Activated CD4-positive, alpha-beta memory T cell treated with anti-CD3 and anti-CD28 coated beads for 36 hours (primary cell): ENCODE measurements at regions of chr7 and their contacts with region 1.

Region 1: GRCh38 chr7:150753826-150754603 is 16.8 kb downstream of the GIMAP5 start:
- DNase-seq: peak; percentile 54
- H3K4me3 Mint-ChIP-seq: peak overlapping the region; percentile 26
- H3K27ac Mint-ChIP-seq: peak overlapping the region; percentile 94
- H3K4me1 Mint-ChIP-seq: peaks cover 74% of the 10 kb centered on the region
- H3K27me3 Mint-ChIP-seq: no peaks in the 10 kb centered on the region

Region 2: GRCh38 chr7:150314639-150315239 is 439.3 kb before region 1 on chr7:
- CTCF ChIA-PET with region 1: no interaction called
- POLR2A ChIA-PET with region 1: no interaction called
- intact Hi-C with region 1: no loop called
- DNase-seq: no peak
- H3K4me3 Mint-ChIP-seq: no peak overlapping the region
- H3K27ac Mint-ChIP-seq: no peak overlapping the region
- H3K4me1 Mint-ChIP-seq: peaks cover 11% of the 10 kb centered on the region
- H3K27me3 Mint-ChIP-seq: no peaks in the 10 kb centered on the region

Region 3: GRCh38 chr7:150404805-150405583 is 349.0 kb before region 1 on chr7:
- CTCF ChIA-PET with region 1: interaction called, 6 read pairs
- POLR2A ChIA-PET with region 1: interaction called, 4 read pairs
- intact Hi-C with region 1: loop called (anchors 1 kb)
- DNase-seq: peak; percentile 85
- H3K4me3 Mint-ChIP-seq: peak overlapping the region; percentile 86
- H3K27ac Mint-ChIP-seq: peak overlapping the region; percentile 86
- H3K4me1 Mint-ChIP-seq: peaks cover 35% of the 10 kb centered on the region
- H3K27me3 Mint-ChIP-seq: no peaks in the 10 kb centered on the region

Region 4: GRCh38 chr7:150502519-150502918 is 251.5 kb before region 1 on chr7:
- CTCF ChIA-PET with region 1: interaction called, 3 read pairs
- POLR2A ChIA-PET with region 1: no interaction called
- intact Hi-C with region 1: loop called (anchors 5 kb)
- DNase-seq: peak; percentile 62
- H3K4me3 Mint-ChIP-seq: peak overlapping the region; percentile 36
- H3K27ac Mint-ChIP-seq: peak overlapping the region; percentile 98
- H3K4me1 Mint-ChIP-seq: peaks cover 82% of the 10 kb centered on the region
- H3K27me3 Mint-ChIP-seq: no peaks in the 10 kb centered on the region

Region 5: DNA sequence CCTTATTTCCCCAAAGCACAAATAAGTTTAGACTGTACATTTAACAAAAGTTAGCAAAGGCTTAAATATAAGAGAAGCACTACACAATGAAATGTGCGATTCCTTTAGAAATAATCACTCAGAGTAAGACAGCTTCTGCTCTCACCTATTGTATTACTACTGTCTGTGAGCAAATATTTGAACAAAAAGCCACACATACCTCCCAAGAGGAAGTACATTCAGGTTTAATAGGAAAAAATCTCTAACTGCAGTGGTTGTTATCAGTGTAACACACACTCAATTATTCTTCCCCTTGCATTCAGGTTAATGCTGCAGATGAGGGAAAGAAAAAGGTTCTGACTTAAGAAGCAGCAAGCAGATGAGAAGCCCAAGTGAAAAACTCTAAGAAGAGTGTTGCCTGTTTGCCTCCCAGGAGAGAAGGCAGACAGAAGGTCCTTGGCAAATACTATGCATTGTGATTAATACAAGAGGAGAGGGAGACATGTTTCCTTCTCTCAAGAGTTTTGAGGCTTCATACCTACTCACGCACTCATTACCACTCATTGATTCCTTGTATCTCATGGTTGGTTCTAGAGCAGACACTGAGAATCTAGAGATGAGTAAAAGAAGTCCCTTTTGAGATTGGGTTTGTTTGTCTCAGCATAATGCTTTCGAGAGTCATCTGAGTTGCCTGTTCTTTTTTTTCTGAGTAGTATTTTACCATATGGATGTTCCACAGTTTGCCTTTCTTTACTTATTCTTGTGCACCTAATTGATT is 173.2 kb before region 1 on chr7:
- CTCF ChIA-PET with region 1: no interaction called
- POLR2A ChIA-PET with region 1: interaction called, 5 read pairs
- intact Hi-C with region 1: loop called (anchors 1 kb)
- DNase-seq: no peak
- H3K4me3 Mint-ChIP-seq: no peak overlapping the region
- H3K27ac Mint-ChIP-seq: peak overlapping the region; percentile 79
- H3K4me1 Mint-ChIP-seq: peaks cover 37% of the 10 kb centered on the region
- H3K27me3 Mint-ChIP-seq: no peaks in the 10 kb centered on the region

Region 6: GRCh38 chr7:150716368-150716767 is 37.6 kb before region 1 on chr7 and contains the start of gene GIMAP1:
- CTCF ChIA-PET with region 1: interaction called, 17 read pairs
- POLR2A ChIA-PET with region 1: interaction called, 13 read pairs
- intact Hi-C with region 1: loop called (anchors 1 kb)
- DNase-seq: peak; percentile 78
- H3K4me3 Mint-ChIP-seq: peak within 1 kb of the TSS; percentile 96
- H3K27ac Mint-ChIP-seq: peak within 1 kb of the TSS; percentile 92
- H3K4me1 Mint-ChIP-seq: peaks cover 50% of the 10 kb centered on the region
- H3K27me3 Mint-ChIP-seq: no peaks in the 10 kb centered on the region
- total RNA-seq, gene GIMAP1: 6.0 to 6.2 TPM